Sigmoid colon (tissue), 7 donors: ENCODE measurements at regions of chr3 and their contacts with region 1.

Region 1: GRCh38 chr3:7309641-7310102 is 448.8 kb downstream of the GRM7 start:
- DNase-seq: peak; percentile 74
- H3K4me3 ChIP-seq: no peak overlapping the region
- H3K27ac ChIP-seq: peak overlapping the region in 2 of 4 donors; percentile 15 to 40
- H3K4me1 ChIP-seq: peaks cover 0 to 38% (median 21%) of the 10 kb centered on the region in 4 donors
- H3K27me3 ChIP-seq: no peaks in the 10 kb centered on the region
- CTCF ChIP-seq: no peak
- EP300 ChIP-seq: peak in 3 of 4 donors; percentile 20 to 74 (median 24)
- POLR2A ChIP-seq: no peak

Region 2: DNA sequence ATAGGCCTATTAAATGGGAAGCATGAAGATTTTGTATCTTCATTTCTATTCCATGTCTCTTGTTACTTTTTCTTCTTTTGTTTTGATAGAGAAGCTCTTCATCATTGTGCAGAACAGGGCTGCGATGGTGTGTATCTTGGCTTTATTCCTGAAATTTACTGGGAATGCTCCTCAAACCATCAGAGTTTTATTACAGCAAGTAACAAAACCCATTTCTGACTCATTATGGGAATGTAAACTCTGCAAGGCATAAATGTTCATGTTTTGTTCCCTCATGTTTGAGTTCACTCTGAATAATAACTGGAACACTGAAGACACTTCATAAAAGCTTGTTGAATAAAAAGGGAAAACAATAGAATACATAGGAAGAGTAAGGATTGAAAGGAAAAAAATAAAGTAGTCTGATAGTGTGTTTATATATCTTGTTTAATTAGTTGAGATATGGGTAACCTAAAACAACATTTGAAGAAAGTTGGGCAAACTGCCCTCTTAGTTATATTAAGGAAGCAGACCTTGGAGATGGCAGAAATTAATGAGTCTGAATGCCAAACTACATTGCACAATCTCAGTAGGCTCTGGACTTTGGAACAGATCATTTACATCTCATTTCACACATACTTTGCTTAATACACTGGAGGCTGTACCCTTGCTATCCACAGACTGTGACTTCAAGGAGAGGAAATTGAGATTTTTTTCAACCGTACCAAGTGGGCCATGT is 72.8 kb after region 1 on chr3:
- intact Hi-C with region 1: loop called (anchors 5 kb)
- DNase-seq: no peak
- H3K4me3 ChIP-seq: no peak overlapping the region
- H3K27ac ChIP-seq: peak overlapping the region in 3 of 4 donors; percentile 47 to 65 (median 54)
- H3K4me1 ChIP-seq: peaks cover 0 to 35% (median 29%) of the 10 kb centered on the region in 4 donors
- H3K27me3 ChIP-seq: no peaks in the 10 kb centered on the region
- CTCF ChIP-seq: no peak
- EP300 ChIP-seq: peak in 3 of 4 donors; percentile 20 to 46 (median 40)
- POLR2A ChIP-seq: no peak